Motor neuron (in vitro differentiated cells): ENCODE measurements at regions of chr6 and their contacts with region 1.

Region 1: GRCh38 chr6:50128420-50129005 is 78.8 kb upstream of the DEFB112 start:
- ATAC-seq: no peak
- H3K4me3 ChIP-seq: no peak overlapping the region
- H3K27ac ChIP-seq: no peak overlapping the region
- H3K4me1 ChIP-seq: no peaks in the 10 kb centered on the region

Region 2: GRCh38 chr6:48505621-48506020 is 1622.9 kb before region 1 on chr6:
- in situ Hi-C with region 1: no loop called
- ATAC-seq: no peak
- H3K4me3 ChIP-seq: no peak overlapping the region
- H3K27ac ChIP-seq: no peak overlapping the region
- H3K4me1 ChIP-seq: no peaks in the 10 kb centered on the region

Region 3: GRCh38 chr6:50591135-50591534 is 462.6 kb after region 1 on chr6:
- in situ Hi-C with region 1: loop called in 2 of 9 experiments (anchors 25 kb)
- ATAC-seq: peak in 5 of 8 experiments; percentile 53 to 64 (median 62)
- H3K4me3 ChIP-seq: no peak overlapping the region
- H3K27ac ChIP-seq: no peak overlapping the region
- H3K4me1 ChIP-seq: no peaks in the 10 kb centered on the region

Region 4: GRCh38 chr6:50602292-50602691 is 473.8 kb after region 1 on chr6:
- in situ Hi-C with region 1: loop called in 7 of 9 experiments (anchors 25 kb)
- ATAC-seq: peak in 1 of 8 experiments; percentile 62
- H3K4me3 ChIP-seq: no peak overlapping the region
- H3K27ac ChIP-seq: no peak overlapping the region
- H3K4me1 ChIP-seq: no peaks in the 10 kb centered on the region

Region 5: DNA sequence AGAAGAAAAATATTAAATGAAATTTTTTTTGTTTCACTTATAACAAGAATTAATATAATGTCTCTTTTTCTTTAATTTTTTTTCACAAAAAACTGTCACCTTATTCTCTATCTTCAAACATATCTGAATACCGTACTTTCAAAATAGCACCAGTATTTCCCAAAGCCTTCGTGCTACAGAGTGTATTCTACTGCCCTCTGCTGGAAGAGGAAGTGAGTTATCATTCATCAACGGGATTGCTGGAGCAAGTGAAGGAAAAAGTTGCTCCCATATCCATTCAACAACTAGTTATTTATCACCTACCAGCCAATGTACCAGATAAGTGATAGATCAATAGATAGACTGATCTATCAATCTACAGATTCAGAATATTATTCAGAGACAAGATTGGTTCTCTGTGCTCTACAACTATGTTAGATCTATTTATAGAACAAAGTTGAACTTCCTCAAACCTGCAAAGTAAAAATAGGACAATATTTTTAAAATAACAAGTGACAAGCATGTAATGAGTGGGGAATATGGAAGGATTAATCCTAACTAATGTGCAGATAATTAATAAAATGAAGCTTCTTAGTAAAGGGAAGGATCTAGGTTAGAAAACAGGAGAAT is 663.5 kb after region 1 on chr6:
- in situ Hi-C with region 1: loop called in 5 of 9 experiments (anchors 10 to 25 kb)
- ATAC-seq: peak in 4 of 8 experiments; percentile 43 to 71 (median 54)
- H3K4me3 ChIP-seq: no peak overlapping the region
- H3K27ac ChIP-seq: no peak overlapping the region
- H3K4me1 ChIP-seq: no peaks in the 10 kb centered on the region